HAP-1 (cell line): ENCODE measurements at regions of chr6 and their contacts with region 1.

Region 1: GRCh38 chr6:151451950-151452749 is at the start of gene RMND1:
- DNase-seq: peak; percentile 99 to 100
- H3K4me3 ChIP-seq: peak within 1 kb of the TSS; percentile 86
- H3K4me1 ChIP-seq: peaks cover 29% of the 10 kb centered on the region
- H3K27me3 ChIP-seq: no peaks in the 10 kb centered on the region

Region 2: DNA sequence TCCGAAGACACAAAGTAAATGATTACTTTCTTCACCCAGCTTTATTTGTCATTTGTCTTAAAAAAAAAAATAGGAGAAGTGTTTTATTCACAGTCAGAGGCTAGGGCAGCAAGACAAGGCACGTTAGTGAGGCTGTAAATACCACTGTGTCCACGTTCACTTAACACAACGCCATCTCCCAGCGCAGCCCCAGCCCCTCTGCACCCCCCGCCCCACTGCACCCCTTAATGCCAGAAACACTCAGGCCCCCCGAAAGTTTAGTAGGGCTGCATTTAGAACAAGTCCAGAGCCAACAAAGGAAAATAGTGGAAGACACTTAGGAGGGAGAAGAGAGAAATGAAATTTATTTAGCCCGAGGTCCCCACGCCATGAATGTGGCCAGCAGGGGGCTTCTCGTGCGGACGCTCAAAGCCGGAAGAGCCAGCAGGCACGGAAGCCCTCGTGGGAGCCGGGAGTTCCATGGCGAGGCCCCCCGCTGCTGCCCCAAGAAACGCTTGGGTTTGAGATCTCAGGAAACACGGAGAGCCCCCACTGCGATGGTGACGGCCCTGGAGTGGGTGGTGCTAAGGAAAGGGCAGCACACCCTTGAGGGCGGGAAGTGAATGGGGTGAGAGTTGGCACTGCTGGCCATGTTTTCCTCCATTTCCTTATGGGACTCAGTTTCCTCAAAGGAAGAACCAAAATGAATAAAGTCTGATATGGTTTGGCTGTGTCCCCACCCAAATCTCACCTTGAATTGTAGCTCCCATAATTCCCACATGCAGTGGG is 1033.1 kb before region 1 on chr6:
- in situ Hi-C with region 1: no loop called
- DNase-seq: peak; percentile 85 to 90
- H3K4me3 ChIP-seq: peak overlapping the region; percentile 5; the same call in 1 of the 2 replicates
- H3K4me1 ChIP-seq: peaks cover 23% of the 10 kb centered on the region
- H3K27me3 ChIP-seq: no peaks in the 10 kb centered on the region

Region 3: GRCh38 chr6:150491131-150491810 is 960.9 kb before region 1 on chr6:
- in situ Hi-C with region 1: no loop called
- DNase-seq: no peak
- H3K4me3 ChIP-seq: no peak overlapping the region
- H3K4me1 ChIP-seq: 0 out of 2 replicates have a peak, but pooled peaks cover 4% of the 10 kb centered on the region
- H3K27me3 ChIP-seq: no peaks in the 10 kb centered on the region

Region 4: DNA sequence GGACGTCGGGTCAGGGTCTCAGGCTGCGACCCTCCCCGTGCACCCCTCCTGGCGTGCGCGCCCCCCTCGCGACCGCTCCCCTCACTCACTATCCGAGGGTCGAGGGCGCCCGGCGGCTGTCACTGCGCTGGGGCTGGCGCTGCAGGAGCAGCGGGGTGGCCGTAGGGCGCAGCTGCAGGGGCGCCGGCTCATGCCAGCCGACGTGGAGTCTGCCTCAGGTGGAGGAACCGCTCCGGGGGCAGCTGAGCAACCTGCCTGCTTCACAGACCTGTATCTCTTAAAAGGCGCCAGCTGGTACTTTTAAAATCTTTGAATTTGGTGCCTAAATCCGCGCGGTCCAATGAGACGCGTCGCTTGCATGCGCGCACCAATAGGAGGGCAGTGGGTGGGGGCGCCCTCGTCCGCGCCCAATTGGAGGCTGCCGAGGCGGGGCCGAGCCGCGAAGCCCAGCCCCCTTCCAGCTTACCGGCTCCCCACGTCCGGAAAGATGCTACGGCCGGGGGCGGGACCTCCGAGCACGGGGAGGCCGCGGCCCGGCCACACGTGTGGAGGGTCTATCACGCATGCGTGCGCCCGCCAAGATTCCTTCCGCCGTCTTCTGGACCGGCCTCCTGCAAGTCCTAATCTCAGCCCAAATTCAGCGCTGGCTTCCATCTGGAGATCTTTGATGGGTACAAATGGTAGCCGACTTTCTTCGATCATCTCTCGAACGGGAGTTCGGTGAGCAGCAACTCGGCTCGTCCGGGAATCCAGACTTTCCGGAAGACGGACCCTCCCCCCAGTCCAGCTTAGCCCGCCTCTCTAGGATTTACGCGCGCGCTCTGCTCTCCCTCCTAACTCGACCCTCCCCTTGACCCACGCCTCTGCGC is 1530.9 kb after region 1 on chr6 and contains the start of gene FBXO5:
- in situ Hi-C with region 1: loop called (anchors 25 kb)
- DNase-seq: peak; percentile 94 to 97
- H3K4me3 ChIP-seq: peak within 1 kb of the TSS; percentile 72
- H3K4me1 ChIP-seq: peaks cover 26% of the 10 kb centered on the region
- H3K27me3 ChIP-seq: no peaks in the 10 kb centered on the region